ENCODE measurements at regions of chr17 and their contacts with region 1.

Region 1: DNA sequence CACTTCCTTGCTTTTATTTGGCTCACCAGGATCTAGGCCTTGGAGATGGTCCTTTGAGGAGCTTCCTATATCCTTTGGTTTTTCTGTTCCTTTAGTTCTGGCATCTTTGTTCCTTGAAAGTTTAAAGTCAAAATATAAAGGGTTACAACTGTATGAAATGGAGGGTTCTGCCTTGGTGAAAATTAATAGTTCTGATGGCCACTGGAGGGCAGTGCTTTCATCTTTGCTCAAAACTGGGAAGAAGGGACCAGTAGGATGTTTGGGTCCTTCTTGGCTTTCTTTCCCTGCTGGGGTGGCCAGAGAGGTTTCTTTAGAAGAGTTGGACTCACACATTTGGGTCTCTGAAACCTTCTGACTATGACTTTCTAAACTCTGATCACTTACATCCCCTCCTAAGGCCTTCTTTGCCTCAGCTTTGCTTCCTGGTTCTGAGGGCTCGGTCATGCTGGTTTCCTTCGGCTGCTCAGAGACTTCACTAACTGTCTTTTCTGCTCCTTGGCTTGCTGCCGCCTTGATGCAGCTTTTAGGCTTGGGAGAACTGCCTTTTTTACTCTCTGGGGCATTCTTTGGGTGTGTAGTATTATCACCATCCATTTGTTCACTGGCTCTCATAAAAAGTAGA is 10.9 kb upstream of the ITGA2B start:
- DNase-seq: no peak
- H3K4me3 ChIP-seq: no peak overlapping the region
- H3K27me3 ChIP-seq: no peaks in the 10 kb centered on the region
- CTCF ChIP-seq: peak; percentile 59

Region 2: GRCh38 chr17:44385287-44386181 is 14.8 kb before region 1 on chr17:
- CTCF ChIA-PET with region 1: interaction called, 11 read pairs
- POLR2A ChIA-PET with region 1: no interaction called
- DNase-seq: peak; percentile 13
- H3K4me3 ChIP-seq: peak overlapping the region; percentile 53
- H3K27me3 ChIP-seq: peaks cover 10% of the 10 kb centered on the region
- CTCF ChIP-seq: peak; percentile 42

Measured in BJ (cell line).